Activated T-helper 2 cell treated with anti-CD3 and anti-CD28 coated beads, Interferon-gamma antibody, Interleukin-2, Interleukin-4, amounts not matched to agents 10 μg/mL and 5 μg/mL and 100 μg/mL, durations not matched to agents 14 hours and 24 hours and 36 hours (primary cell): ENCODE measurements at regions of chr20 and their contacts with region 1.

Region 1: DNA sequence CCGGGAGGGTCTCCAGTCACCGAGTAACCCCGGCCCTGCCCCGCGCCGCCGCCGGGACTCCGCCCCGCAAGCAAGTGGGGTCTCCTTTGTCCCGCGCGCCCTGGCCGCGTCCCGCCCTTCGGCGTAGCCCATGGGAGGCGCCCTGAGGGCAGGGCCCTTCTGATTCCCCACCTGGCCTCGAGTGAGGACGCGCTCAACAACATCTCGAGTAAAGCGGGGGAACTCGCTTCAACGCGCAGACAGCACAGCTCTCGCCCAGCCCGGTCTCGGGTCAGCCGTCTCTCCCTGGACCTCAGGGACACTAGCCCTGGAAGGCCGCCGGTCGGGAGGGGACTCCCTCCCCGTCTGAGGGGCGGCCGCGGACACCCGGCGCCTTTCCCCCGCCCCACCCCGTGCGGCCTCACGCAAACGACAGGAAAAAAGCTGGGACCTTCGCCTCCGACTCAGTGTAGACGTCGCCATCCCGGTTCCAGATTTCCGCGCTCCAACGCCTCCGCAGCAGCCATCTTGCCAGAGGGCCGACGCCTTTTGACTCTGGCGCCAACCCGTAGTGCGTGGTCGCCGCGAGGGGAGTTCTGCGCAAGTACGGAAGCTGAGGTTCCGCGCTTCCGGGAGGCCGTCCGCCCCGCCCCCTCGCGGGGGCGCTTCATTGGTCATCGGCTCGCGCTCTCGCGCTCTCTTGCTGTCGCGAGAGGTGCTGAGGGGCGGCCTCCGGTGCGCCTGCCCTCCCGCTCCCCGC is 412 bp upstream of the GID8 start:
- DNase-seq: peak; percentile 97
- H3K4me3 Mint-ChIP-seq: peak overlapping the region; percentile 90
- H3K27ac Mint-ChIP-seq: peak overlapping the region; percentile 91
- H3K4me1 Mint-ChIP-seq: peaks cover 26% of the 10 kb centered on the region
- H3K27me3 Mint-ChIP-seq: no peaks in the 10 kb centered on the region

Region 2: DNA sequence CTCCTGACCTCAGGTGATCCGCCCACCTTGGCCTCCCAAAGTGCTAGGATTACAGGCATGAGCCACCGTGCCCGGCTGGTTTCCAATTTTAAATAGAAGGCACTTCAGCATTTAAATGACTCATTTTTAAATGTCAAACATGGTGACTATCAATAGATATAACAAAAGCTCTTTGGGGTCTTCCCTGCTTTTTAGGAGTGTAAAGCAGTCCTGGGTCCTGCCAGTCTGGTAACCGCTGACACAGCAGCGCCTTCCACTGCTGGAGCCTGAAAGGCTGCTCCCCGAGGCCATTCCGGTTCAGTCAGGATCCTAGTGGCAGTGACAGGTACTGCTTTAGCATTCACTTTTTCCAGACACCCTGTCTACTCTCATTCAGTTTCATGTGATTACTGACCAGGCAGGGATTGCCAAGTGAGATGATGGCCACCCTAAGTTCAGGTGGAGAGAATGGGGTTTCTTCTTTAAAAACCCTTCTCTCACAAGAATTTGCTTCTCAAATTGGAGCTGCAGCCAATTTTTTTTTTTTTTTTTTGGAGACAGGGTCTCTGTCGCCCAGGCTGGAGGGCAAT is 16.3 kb before region 1 on chr20:
- intact Hi-C with region 1: loop called (anchors 2 kb)
- DNase-seq: peak; percentile 45
- H3K4me3 Mint-ChIP-seq: peak overlapping the region; percentile 61
- H3K27ac Mint-ChIP-seq: peak overlapping the region; percentile 86
- H3K4me1 Mint-ChIP-seq: peaks cover 65% of the 10 kb centered on the region
- H3K27me3 Mint-ChIP-seq: no peaks in the 10 kb centered on the region

Region 3: GRCh38 chr20:62926239-62927104 is 11.1 kb before region 1 on chr20 and contains the start of gene DIDO1:
- intact Hi-C with region 1: loop called (anchors 1 kb)
- DNase-seq: peak; percentile 86
- H3K4me3 Mint-ChIP-seq: peak within 1 kb of the TSS; percentile 96
- H3K27ac Mint-ChIP-seq: peak within 1 kb of the TSS; percentile 95
- H3K4me1 Mint-ChIP-seq: peaks cover 52% of the 10 kb centered on the region
- H3K27me3 Mint-ChIP-seq: no peaks in the 10 kb centered on the region
- total RNA-seq, gene DIDO1: 57.9 and 59.8 TPM in 2 replicates

Region 4: DNA sequence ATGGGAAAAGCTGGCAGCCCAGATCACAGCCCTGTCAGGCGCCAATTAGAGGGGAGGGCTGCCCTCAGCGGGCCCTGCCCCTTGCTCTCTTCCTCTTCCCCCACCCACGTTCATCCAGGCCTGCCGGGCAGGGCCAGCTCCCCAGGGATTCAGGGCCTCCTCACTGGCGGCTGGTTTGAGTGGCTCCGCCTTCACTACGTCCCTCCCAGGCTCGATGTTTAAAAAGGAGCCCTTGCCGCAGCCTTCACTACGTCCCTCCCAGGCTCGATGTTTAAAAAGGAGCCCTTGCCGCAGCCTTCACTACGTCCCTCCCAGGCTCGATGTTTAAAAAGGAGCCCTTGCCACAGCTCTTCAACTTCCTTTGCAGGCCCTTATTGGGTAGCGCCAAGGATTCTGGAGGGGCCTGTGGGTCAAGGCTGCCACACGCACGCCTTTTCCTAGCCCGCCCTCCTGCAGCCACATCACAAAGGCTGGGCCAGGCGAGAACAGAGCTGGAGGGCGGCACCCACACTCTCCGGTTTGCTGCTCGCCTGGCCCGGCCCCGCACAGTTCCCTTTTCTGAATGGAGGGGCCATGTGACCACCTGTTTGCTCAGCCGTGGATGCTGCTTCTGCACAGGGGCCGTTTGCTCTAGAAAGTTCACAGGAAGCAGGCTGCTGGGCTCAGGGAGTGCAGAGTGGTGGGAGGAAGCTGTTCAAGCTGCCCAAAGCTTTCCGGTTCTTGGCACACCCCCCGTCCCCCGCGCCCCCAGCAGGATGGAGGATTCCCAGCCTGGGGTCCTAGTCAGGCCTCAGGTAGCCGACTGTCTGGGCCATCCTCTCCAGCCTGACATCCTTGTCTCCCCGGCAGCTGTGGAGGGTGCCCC is 16.5 kb after region 1 on chr20:
- intact Hi-C with region 1: loop called (anchors 2 kb)
- DNase-seq: peak; percentile 65
- H3K4me3 Mint-ChIP-seq: peak overlapping the region; percentile 74
- H3K27ac Mint-ChIP-seq: peak overlapping the region; percentile 87
- H3K4me1 Mint-ChIP-seq: peaks cover 13% of the 10 kb centered on the region
- H3K27me3 Mint-ChIP-seq: no peaks in the 10 kb centered on the region